ENCODE measurements at regions of chr7 and their contacts with region 1.

Region 1: GRCh38 chr7:36707465-36707864 is 16.8 kb downstream of the AOAH start:
- DNase-seq: no peak
- H3K4me3 Mint-ChIP-seq: no peak overlapping the region
- H3K27ac Mint-ChIP-seq: peak overlapping the region; percentile 82
- H3K4me1 Mint-ChIP-seq: peaks cover 71% of the 10 kb centered on the region
- H3K27me3 Mint-ChIP-seq: no peaks in the 10 kb centered on the region

Region 2: GRCh38 chr7:35908305-35909216 is 798.9 kb before region 1 on chr7:
- intact Hi-C with region 1: no loop called
- DNase-seq: no peak
- H3K4me3 Mint-ChIP-seq: no peak overlapping the region
- H3K27ac Mint-ChIP-seq: no peak overlapping the region
- H3K4me1 Mint-ChIP-seq: peaks cover 6% of the 10 kb centered on the region
- H3K27me3 Mint-ChIP-seq: no peaks in the 10 kb centered on the region

Region 3: DNA sequence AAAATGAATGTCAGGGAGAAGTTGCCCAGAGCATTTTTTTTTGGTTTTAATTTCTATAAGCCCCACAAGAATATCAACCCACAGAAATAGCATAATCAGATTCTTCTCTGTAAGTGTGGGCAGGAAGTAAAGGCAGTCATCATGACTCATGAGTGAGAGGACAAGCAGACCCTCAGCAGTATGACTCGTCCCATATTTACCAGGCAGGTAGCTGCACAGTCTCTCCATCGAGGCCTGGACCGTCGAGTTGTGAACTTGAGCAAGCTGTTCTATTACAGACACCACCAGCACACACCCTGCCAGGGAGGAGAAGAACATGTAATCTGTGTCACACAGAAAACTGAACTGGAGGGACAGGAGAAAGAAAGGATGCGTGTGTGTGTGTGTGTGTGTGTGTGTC is 21.0 kb before region 1 on chr7:
- intact Hi-C with region 1: loop called (anchors 1 kb)
- DNase-seq: no peak
- H3K4me3 Mint-ChIP-seq: peak overlapping the region; percentile 69
- H3K27ac Mint-ChIP-seq: peak overlapping the region; percentile 91
- H3K4me1 Mint-ChIP-seq: peaks cover 78% of the 10 kb centered on the region
- H3K27me3 Mint-ChIP-seq: no peaks in the 10 kb centered on the region

Region 4: DNA sequence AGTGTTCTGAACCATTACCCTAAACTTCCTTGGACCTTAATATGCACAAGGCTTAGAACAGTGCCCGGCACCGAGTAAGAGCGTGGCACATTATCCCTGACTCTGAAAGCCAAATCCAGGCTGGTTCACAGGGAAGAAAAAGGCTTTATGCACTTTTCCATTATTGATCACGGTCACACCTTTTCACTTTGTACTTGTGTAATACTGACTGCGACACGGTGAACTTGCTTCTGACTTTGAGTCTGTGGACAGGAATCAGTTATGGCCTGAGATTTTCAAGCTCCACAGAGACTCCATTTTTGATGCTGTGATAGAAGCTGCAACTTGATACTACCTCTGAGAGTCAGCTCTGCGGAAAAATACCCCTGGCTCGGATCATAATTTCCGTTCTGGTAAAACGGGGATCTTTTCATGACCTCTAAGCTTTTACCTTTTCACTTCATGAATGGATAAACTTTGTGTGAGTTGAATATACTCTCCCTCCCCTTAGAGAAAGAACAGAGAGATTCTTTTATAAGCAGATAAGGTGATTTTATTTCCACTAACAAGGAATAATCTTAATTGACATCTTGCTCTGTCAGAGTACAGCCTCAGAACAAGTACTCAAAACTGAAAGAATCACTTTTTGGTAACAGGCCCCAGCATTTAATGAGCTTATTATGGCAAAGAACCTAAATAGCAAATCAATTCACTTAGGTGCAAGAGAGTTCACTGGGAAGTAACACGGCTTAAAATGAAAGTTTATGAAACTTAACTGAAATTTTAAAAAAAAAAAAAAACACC is 652.4 kb after region 1 on chr7:
- intact Hi-C with region 1: no loop called
- DNase-seq: no peak
- H3K4me3 Mint-ChIP-seq: peak overlapping the region; percentile 35
- H3K27ac Mint-ChIP-seq: peak overlapping the region; percentile 49
- H3K4me1 Mint-ChIP-seq: peaks cover 76% of the 10 kb centered on the region
- H3K27me3 Mint-ChIP-seq: no peaks in the 10 kb centered on the region